ENCODE measurements at regions of chr4 and their contacts with region 1.

Region 1: GRCh38 chr4:75525910-75526309 is 11.6 kb downstream of the THAP6 start:
- DNase-seq: no peak
- ATAC-seq: no peak
- H3K4me3 ChIP-seq: no peak overlapping the region
- H3K27ac ChIP-seq: no peak overlapping the region
- H3K4me1 ChIP-seq: peaks cover 3% of the 10 kb centered on the region
- H3K27me3 ChIP-seq: no peaks in the 10 kb centered on the region
- CTCF ChIP-seq: no peak
- POLR2A ChIP-seq: no peak
- RAD21 ChIP-seq: no peak

Region 2: GRCh38 chr4:75546976-75547375 is 21.1 kb after region 1 on chr4:
- CTCF ChIA-PET with region 1: no interaction called
- POLR2A ChIA-PET with region 1: no interaction called
- dilution Hi-C with region 1: no loop called
- in situ Hi-C with region 1: no loop called
- intact Hi-C with region 1: loop called (anchors 1 kb)
- DNase-seq: no peak
- ATAC-seq: no peak
- H3K4me3 ChIP-seq: no peak overlapping the region
- H3K27ac ChIP-seq: no peak overlapping the region
- H3K4me1 ChIP-seq: no peaks in the 10 kb centered on the region
- H3K27me3 ChIP-seq: no peaks in the 10 kb centered on the region
- CTCF ChIP-seq: no peak
- POLR2A ChIP-seq: no peak
- RAD21 ChIP-seq: no peak